Breast epithelium (tissue), 4 donors: ENCODE measurements at regions of chr11 and their contacts with region 1.

Region 1: DNA sequence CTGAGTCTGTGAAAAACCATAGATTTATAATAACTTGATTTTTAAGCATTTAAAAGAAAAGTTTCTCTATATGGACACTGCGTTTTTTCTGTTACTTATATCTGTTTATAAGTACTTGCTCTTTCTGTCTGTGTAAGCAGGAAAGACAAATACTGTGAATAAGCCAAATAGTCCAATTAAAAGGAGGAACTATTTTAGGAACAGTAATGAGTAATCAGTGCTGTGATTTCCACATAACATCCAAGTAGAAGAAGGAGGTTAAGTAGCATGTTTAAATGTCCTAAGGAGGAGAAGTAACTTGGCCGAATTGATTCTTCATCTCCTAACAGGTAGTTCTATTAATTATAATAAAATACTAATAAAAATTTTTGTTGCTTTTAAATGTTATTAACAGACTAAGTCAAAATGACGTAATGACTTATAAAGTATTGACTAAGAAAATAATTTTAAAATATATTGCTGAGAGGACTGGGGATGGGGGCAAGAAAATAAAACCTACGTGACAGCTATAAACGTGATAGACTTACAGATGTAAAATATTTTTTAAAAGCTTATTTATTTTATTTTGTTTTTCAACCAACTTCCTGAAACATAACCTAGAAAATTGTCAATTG is 40.7 kb downstream of the ZNF214 start:
- DNase-seq: no peak
- H3K4me3 ChIP-seq: no peak overlapping the region
- H3K27ac ChIP-seq: no peak overlapping the region
- H3K4me1 ChIP-seq: no peaks in the 10 kb centered on the region
- H3K27me3 ChIP-seq: no peaks in the 10 kb centered on the region
- CTCF ChIP-seq: no peak
- POLR2A ChIP-seq: no peak

Region 2: DNA sequence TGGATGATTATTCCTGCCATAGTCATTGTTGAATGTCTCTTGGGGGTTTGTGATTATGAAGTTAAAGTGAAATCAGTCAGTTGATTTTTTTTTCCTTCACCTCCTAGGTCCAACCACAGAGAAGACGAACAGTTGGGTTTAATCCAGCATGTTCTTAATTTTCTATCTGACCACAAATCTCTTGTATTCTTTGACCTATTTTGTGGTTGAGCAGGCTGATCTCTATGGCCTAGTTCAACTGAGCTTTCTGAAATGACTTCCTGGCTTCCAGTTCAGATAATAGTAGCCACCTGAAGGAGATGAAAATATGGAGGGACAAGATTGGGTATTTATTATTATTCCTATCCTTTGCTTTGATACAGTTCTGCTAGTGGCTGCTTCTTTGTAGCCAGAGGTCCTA is 1005.9 kb before region 1 on chr11:
- intact Hi-C with region 1: loop called (anchors 10 kb)
- DNase-seq: no peak
- H3K4me3 ChIP-seq: no peak overlapping the region
- H3K27ac ChIP-seq: no peak overlapping the region
- H3K4me1 ChIP-seq: no peaks in the 10 kb centered on the region
- H3K27me3 ChIP-seq: no peaks in the 10 kb centered on the region
- CTCF ChIP-seq: no peak
- POLR2A ChIP-seq: no peak

Region 3: DNA sequence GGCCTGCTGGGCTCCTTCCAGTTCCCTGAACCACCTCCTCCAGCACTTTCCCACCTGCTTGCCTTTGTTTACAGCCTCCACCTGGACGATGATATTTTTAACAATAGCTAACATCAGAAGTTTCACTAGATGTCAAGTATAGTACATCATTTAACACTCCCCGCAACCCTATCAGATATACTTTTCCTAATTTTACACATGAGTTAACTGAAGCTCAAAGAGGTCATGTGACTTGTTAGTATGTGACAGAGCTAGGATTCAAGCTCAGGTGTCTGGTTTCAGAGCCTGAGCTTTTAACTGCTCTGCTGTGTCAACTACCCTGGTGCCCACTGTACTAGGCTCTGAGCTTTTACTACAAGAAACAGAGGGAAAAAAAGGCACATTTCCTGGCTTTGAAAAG is 524.4 kb before region 1 on chr11:
- intact Hi-C with region 1: no loop called
- DNase-seq: no peak
- H3K4me3 ChIP-seq: no peak overlapping the region
- H3K27ac ChIP-seq: no peak overlapping the region
- H3K4me1 ChIP-seq: no peaks in the 10 kb centered on the region
- H3K27me3 ChIP-seq: no peaks in the 10 kb centered on the region
- CTCF ChIP-seq: no peak
- POLR2A ChIP-seq: no peak

Region 4: DNA sequence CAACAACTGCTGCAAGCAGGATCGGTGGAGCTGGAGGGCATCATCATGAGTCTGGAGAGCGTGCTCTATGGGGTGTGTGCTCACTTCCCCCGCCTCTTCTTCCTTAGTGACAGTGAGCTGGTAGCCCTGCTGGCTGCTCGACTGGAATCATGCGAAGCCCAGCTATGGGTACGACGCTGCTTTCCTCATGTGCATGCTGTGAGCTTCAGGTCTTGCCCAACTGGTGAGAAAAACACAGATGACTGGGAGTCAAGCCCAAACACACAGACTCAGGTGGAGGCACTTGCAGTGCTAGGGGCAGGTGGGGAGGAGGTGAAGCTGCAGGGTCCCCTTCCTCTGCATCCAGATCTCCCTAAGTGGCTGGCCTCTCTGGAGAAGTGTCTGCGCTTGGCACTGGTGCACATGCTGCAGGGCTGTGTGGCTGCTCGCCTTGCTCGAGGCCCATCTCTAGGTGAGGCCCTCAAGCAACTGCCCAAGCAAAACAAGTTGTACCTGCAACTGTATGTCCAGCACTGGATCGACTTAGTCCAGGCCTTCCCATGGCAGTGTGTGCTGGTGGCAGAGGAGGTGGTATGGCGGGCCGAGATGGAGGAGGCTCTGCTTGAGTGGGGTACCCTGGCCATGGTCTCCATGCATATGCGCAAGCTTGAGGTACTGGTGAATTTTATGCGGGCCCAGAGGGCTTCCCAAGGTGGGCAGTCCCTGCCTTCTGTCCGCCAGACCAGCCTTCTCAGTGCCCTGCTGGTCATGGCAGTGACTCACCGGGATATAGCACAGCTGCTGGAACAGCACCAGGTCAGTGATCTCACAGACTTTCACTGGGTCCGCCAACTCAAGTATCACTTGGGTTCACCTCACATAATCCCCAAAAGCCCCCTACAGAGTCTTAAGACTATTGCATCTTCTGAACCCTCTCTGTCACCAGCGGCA is 434.3 kb before region 1 on chr11:
- intact Hi-C with region 1: no loop called
- DNase-seq: no peak
- H3K4me3 ChIP-seq: no peak overlapping the region
- H3K27ac ChIP-seq: no peak overlapping the region
- H3K4me1 ChIP-seq: no peaks in the 10 kb centered on the region
- H3K27me3 ChIP-seq: no peaks in the 10 kb centered on the region
- CTCF ChIP-seq: no peak
- POLR2A ChIP-seq: no peak

Region 5: DNA sequence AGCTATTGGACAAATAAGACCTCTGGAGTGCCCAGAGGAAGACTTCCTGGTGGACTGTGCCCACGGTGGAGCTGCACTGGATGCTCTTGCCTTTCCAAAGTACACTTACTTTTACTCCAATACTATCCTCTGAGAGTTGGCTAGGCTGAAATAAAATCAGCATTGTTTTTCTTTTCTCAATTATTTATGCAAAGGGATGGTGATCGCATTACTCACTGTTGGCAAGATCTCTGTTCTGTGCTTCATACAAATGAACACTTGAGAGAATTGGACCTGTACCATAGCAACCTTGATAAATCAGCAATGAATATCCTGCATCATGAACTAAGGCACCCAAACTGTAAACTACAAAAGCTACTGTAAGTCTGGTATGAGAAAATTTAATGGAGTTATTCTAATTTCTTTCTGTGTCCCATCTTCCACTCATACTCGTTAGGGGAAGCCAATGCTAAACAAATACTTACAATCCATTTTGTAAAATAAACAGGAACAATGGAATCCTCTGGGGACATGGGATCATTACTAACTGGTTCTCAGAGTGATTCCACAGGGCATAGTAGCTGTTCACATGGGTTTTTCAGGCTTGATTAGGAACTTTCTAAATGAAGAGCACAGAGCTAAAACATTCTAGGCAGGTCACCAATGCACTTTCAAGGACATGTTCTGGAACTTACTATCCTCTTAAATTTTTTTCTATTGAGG is 67.2 kb after region 1 on chr11:
- intact Hi-C with region 1: no loop called
- DNase-seq: no peak
- H3K4me3 ChIP-seq: no peak overlapping the region
- H3K27ac ChIP-seq: no peak overlapping the region
- H3K4me1 ChIP-seq: no peaks in the 10 kb centered on the region
- H3K27me3 ChIP-seq: no peaks in the 10 kb centered on the region
- CTCF ChIP-seq: no peak
- POLR2A ChIP-seq: no peak

Region 6: DNA sequence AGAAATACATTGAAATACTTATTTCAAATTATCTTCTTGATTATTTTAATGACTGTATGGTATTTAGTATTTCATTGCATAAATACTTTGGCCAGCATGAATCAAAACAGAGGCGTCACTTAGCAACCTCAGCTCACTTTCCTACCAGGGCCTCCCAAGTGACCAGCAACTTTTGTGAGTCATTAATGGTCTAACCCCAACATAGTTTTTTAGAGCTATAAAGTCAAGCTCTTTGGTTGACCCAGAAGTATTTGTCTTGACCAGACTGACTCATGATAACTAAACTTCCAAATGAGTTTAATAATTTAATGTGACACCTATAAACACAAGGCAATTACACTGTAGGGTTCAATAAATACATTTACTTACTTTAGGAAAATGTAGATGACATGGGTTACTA is 81.4 kb after region 1 on chr11:
- intact Hi-C with region 1: no loop called
- DNase-seq: no peak
- H3K4me3 ChIP-seq: no peak overlapping the region
- H3K27ac ChIP-seq: no peak overlapping the region
- H3K4me1 ChIP-seq: no peaks in the 10 kb centered on the region
- H3K27me3 ChIP-seq: no peaks in the 10 kb centered on the region
- CTCF ChIP-seq: no peak
- POLR2A ChIP-seq: no peak